CD4-positive, alpha-beta T cell (primary cell): ENCODE measurements at regions of chr7 and their contacts with region 1.

Region 1: GRCh38 chr7:138752568-138753518 is 45.0 kb upstream of the TMEM213 start:
- DNase-seq: peak; percentile 85 to 99 (median 92)
- ATAC-seq: peak; percentile 92
- H3K4me3 ChIP-seq: no peak overlapping the region
- H3K4me3 Mint-ChIP-seq: peak overlapping the region; percentile 38
- H3K27ac ChIP-seq: peak overlapping the region; percentile 73
- H3K27ac Mint-ChIP-seq: peak overlapping the region; percentile 94
- H3K4me1 ChIP-seq: peaks cover 43% of the 10 kb centered on the region
- H3K4me1 Mint-ChIP-seq: peaks cover 67% of the 10 kb centered on the region
- H3K27me3 ChIP-seq: no peaks in the 10 kb centered on the region
- H3K27me3 Mint-ChIP-seq: no peaks in the 10 kb centered on the region
- CTCF ChIP-seq: no peak

Region 2: DNA sequence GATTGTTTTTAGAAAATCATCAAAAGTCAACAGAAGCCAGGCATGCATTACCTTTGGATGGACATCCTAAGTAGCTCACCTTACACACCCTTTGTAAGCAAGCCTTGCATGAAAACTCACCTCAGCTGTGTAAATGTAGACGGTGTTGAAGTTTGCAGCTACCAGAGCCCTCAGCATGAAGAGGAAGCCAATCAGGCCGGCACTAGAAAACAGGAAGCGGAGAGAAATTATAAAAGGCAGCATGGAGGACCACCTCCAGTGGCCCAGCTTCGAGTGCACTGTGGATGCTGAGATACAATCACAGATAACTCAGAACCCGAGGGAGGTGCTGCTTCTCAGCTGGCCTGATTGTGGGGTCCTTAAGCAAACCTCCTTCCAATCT is 127.0 kb before region 1 on chr7:
- CTCF ChIA-PET with region 1: no interaction called
- POLR2A ChIA-PET with region 1: interaction called, 10 read pairs
- intact Hi-C with region 1: loop called in 1 of 2 experiments (anchors 10 kb)
- DNase-seq: peak in 5 of 14 experiments; percentile 3 to 40 (median 27)
- ATAC-seq: peak; percentile 63
- H3K4me3 ChIP-seq: no peak overlapping the region
- H3K4me3 Mint-ChIP-seq: peak overlapping the region; percentile 13
- H3K27ac ChIP-seq: no peak overlapping the region
- H3K27ac Mint-ChIP-seq: peak overlapping the region; percentile 61
- H3K4me1 ChIP-seq: peaks cover 18% of the 10 kb centered on the region
- H3K4me1 Mint-ChIP-seq: peaks cover 44% of the 10 kb centered on the region
- H3K27me3 ChIP-seq: no peaks in the 10 kb centered on the region
- H3K27me3 Mint-ChIP-seq: no peaks in the 10 kb centered on the region
- CTCF ChIP-seq: no peak

Region 3: DNA sequence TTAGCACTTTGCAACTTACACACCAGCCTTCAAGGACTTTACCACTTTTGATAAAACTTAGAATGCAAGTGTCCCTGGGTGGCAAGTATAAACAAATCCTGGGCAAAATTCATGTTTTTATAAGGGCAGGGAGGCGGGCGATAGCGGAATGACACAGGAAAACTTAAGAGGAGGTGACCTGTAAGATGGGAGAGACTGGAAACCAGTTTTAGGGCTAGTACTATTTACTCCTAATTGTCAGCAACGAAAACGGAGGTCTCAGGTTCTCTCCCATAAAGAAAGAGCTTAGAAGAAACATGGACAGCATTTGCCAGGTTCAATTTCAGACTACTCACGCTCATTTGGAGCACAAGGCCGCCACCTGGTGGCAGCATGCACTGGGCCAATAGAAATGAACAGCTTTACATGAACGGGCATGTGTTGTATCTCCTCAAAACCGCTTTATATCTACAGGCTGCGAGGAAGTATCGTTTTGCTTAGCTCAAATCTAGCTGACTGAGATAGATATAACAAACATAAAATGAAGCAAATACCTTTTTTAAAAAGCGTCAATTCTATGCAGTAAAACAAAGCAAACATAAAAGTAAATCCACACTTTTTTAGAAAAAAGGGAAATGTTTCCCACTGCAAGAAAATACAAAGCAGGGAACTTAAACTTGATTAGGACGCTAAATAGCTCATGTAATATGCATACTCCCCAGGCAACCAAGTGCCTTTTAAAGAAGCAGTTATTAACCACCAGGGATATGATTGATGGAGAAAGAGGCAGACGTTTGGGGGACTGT is 14.1 kb before region 1 on chr7:
- CTCF ChIA-PET with region 1: interaction called, 29 read pairs
- POLR2A ChIA-PET with region 1: interaction called, 10 read pairs
- intact Hi-C with region 1: no loop called
- DNase-seq: peak; percentile 74 to 95 (median 84)
- ATAC-seq: peak; percentile 97
- H3K4me3 ChIP-seq: no peak overlapping the region
- H3K4me3 Mint-ChIP-seq: no peak overlapping the region
- H3K27ac ChIP-seq: no peak overlapping the region
- H3K27ac Mint-ChIP-seq: no peak overlapping the region
- H3K4me1 ChIP-seq: no peaks in the 10 kb centered on the region
- H3K4me1 Mint-ChIP-seq: peaks cover 5% of the 10 kb centered on the region
- H3K27me3 ChIP-seq: no peaks in the 10 kb centered on the region
- H3K27me3 Mint-ChIP-seq: no peaks in the 10 kb centered on the region
- CTCF ChIP-seq: peak; percentile 93

Region 4: DNA sequence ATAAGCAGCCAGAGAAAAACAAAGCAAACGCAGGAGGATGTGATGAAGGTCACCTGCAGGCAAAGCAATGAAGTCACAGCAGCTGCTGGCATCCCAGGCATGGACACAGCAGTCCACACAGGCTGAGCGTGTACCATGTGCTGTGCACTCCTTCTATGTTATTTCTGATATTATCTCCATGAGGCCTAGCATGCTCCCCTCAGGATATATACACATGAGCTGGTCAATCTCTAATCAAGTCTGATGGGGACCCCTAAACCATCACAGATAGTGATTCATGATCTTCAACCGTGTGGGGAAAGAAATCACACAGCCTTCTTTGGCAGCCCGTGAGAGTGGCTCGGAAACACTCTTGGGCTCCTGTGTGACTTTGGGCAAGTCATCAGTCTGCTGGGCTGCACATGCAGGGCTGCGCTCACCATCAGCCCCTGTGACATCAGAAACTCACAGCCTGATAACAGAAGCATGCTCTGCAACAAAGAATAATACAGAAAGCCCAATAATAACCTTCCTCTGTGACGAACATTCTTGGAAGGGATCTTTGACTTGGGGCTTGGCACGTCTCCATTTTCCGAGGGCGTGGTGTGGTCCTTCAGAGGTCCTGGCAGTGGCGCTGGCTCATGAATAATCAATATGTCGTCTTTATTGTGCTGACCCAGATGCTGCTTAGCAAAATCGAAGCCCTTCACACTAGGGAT is 128.2 kb after region 1 on chr7:
- CTCF ChIA-PET with region 1: interaction called, 6 read pairs
- POLR2A ChIA-PET with region 1: interaction called, 10 read pairs
- intact Hi-C with region 1: loop called in 1 of 2 experiments (anchors 5 kb)
- DNase-seq: no peak
- ATAC-seq: no peak
- H3K4me3 ChIP-seq: no peak overlapping the region
- H3K4me3 Mint-ChIP-seq: no peak overlapping the region
- H3K27ac ChIP-seq: no peak overlapping the region
- H3K27ac Mint-ChIP-seq: no peak overlapping the region
- H3K4me1 ChIP-seq: peaks cover 5% of the 10 kb centered on the region
- H3K4me1 Mint-ChIP-seq: peaks cover 12% of the 10 kb centered on the region
- H3K27me3 ChIP-seq: no peaks in the 10 kb centered on the region
- H3K27me3 Mint-ChIP-seq: no peaks in the 10 kb centered on the region
- CTCF ChIP-seq: no peak

Region 5: DNA sequence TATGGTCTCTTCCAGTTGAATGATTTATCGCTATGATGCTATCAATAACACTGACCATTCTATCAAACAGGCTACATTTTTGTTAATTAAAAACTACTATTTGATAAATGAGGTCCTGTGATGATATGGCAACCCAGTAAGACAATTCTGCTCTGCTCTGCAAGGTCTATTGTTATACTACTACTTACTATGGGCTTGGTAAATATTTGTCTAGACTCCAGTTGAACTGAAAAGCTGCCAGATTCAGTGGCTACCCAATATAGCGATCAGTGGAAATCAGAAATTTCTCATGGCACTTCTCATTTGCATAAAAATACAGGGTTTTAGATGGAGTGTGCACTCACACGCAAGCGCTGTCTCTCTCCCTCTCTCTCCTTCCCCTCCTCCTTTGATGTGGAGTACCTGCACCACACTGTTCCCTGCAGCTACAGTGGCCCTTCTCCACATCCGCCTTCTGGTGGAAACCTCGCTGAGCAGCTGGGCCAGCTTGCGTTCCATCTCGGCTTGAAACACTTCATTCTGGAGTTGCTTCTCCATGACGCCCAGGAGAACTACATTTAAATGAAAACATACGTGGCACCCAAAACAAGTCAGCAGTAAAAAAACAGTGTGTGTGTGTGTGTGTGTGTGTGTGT is 150.5 kb after region 1 on chr7:
- CTCF ChIA-PET with region 1: no interaction called
- POLR2A ChIA-PET with region 1: interaction called, 4 read pairs
- intact Hi-C with region 1: loop called in 1 of 2 experiments (anchors 1 kb)
- DNase-seq: peak; percentile 58 to 93 (median 68)
- ATAC-seq: peak; percentile 95
- H3K4me3 ChIP-seq: peak overlapping the region; percentile 13
- H3K4me3 Mint-ChIP-seq: peak overlapping the region; percentile 85
- H3K27ac ChIP-seq: no peak overlapping the region
- H3K27ac Mint-ChIP-seq: peak overlapping the region; percentile 70
- H3K4me1 ChIP-seq: peaks cover 24% of the 10 kb centered on the region
- H3K4me1 Mint-ChIP-seq: peaks cover 47% of the 10 kb centered on the region
- H3K27me3 ChIP-seq: no peaks in the 10 kb centered on the region
- H3K27me3 Mint-ChIP-seq: peaks cover 21% of the 10 kb centered on the region
- CTCF ChIP-seq: no peak

Region 6: DNA sequence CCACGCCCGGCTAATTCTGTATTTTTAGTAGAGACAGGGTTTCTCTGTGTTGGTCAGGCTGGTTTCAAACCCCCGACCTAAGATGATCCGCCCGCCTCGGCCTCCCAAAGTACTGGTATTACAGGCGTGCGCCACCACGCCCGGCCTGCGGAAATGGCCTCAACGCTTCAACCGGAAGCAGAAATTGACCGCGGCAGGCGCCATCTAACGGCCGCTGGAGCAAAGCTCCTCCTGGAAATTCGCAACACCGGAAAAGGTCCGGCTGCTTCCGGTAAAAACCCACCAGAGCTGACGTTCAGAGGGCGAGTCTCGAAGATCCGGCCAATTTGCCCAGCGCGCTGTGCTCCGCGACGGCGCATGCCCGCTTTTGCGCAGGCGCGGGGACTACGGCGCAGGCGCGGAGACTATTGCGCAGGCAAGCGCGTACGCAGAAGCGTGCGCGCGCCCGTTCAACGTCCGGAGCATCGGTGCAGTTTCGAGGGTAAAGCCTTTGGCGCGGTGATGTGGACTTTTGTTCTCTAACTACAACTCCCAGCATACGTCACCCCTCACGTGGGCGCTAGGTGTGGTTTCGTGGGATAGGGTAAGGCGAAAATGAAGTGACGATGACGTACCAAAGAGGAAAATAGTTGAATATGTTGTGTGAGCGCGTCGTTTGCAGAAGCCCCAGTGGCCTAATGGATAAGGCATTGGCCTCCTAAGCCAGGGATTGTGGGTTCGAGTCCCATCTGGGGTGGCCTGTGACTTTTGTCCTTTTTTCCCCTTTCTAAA is 587.4 kb after region 1 on chr7:
- CTCF ChIA-PET with region 1: no interaction called
- POLR2A ChIA-PET with region 1: interaction called, 3 read pairs
- intact Hi-C with region 1: loop called in 1 of 2 experiments (anchors 5 kb)
- DNase-seq: peak; percentile 95 to 100 (median 97)
- ATAC-seq: peak; percentile 82
- H3K4me3 ChIP-seq: peak overlapping the region; percentile 79
- H3K4me3 Mint-ChIP-seq: peak overlapping the region; percentile 94
- H3K27ac ChIP-seq: peak overlapping the region; percentile 98 to 99
- H3K27ac Mint-ChIP-seq: peak overlapping the region; percentile 99
- H3K4me1 ChIP-seq: peaks cover 19% of the 10 kb centered on the region
- H3K4me1 Mint-ChIP-seq: peaks cover 43% of the 10 kb centered on the region
- H3K27me3 ChIP-seq: no peaks in the 10 kb centered on the region
- H3K27me3 Mint-ChIP-seq: peaks cover 8% of the 10 kb centered on the region
- CTCF ChIP-seq: peak; percentile 43